Activated T-helper 1 cell treated with anti-CD3 and anti-CD28 coated beads, Interleukin-12 subunit alpha, Interleukin-12 subunit beta, Interleukin-2, Interleukin-4 antibody, amounts not matched to agents 30 ng/mL and 10 ng/mL and 1 ng/mL, durations not matched to agents 14 hours and 24 hours and 36 hours (primary cell): ENCODE measurements at regions of chr5 and their contacts with region 1.

Region 1: GRCh38 chr5:1874771-1875220 is 7.9 kb downstream of the IRX4 start:
- DNase-seq: no peak
- H3K4me3 Mint-ChIP-seq: no peak overlapping the region
- H3K27ac Mint-ChIP-seq: no peak overlapping the region
- H3K4me1 Mint-ChIP-seq: no peaks in the 10 kb centered on the region
- H3K27me3 Mint-ChIP-seq: peaks cover 49% of the 10 kb centered on the region

Region 2: DNA sequence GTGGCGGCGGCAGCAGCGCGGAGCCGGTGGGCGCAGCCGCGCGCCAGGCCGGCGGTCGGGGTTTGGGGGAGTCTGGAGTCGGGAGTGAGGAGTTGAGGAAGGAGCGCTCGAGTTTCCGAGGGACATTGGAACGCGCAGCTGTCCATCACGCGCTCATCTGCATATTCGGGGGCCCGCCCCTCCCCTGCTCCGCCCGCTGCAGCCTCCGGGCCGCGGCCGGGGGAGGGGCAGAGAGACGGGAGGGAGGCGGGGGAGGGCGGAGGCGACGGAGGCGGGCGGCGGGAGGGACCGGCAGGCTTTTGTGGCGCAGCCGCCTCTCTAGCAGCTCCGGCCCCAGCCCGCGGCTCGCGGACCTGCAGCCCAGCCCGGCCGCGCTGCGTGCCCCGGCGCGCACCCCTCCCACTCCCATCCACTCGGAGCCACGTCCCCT is 876.8 kb after region 1 on chr5 and contains the start of gene IRX2:
- intact Hi-C with region 1: loop called (anchors 5 kb)
- DNase-seq: no peak
- H3K4me3 Mint-ChIP-seq: no peak within 1 kb of the TSS
- H3K27ac Mint-ChIP-seq: peak within 1 kb of the TSS; percentile 74
- H3K4me1 Mint-ChIP-seq: no peaks in the 10 kb centered on the region
- H3K27me3 Mint-ChIP-seq: peaks cover 53% of the 10 kb centered on the region
- total RNA-seq, gene IRX2: not detected in 2 replicates